GM23248 (cell line): ENCODE measurements at regions of chr1 and their contacts with region 1.

Region 1: GRCh38 chr1:145858894-145859490 is at the start of gene PIAS3:
- DNase-seq: peak; percentile 99
- H3K4me3 ChIP-seq: peak within 1 kb of the TSS; percentile 96
- H3K27ac ChIP-seq: peak within 1 kb of the TSS; percentile 77
- H3K4me1 ChIP-seq: peaks cover 11% of the 10 kb centered on the region; the same call in 1 of the 2 replicates
- H3K27me3 ChIP-seq: no peaks in the 10 kb centered on the region
- total RNA-seq, gene PIAS3: 22.2 and 32.5 TPM in 2 replicates

Region 2: GRCh38 chr1:145751491-145752037 is 107.4 kb before region 1 on chr1:
- in situ Hi-C with region 1: loop called (anchors 10 kb)
- DNase-seq: peak; percentile 98
- H3K4me3 ChIP-seq: peak overlapping the region; percentile 25
- H3K27ac ChIP-seq: peak overlapping the region; percentile 76
- H3K4me1 ChIP-seq: peaks cover 32% of the 10 kb centered on the region
- H3K27me3 ChIP-seq: no peaks in the 10 kb centered on the region